Natural killer cell (primary cell): ENCODE measurements at regions of chr12 and their contacts with region 1.

Region 1: GRCh38 chr12:56630160-56630632 is at the start of gene BAZ2A:
- DNase-seq: peak; percentile 84 to 89
- ATAC-seq: peak; percentile 70 to 88 (median 78)
- H3K4me3 ChIP-seq: peak within 1 kb of the TSS; percentile 97
- H3K4me3 Mint-ChIP-seq: peak within 1 kb of the TSS; percentile 89
- H3K27ac ChIP-seq: peak within 1 kb of the TSS; percentile 96
- H3K27ac Mint-ChIP-seq: peak within 1 kb of the TSS; percentile 85 to 93
- H3K4me1 ChIP-seq: peaks cover 61% of the 10 kb centered on the region
- H3K4me1 Mint-ChIP-seq: peaks cover 62 to 74% of the 10 kb centered on the region in 2 donors
- H3K27me3 ChIP-seq: no peaks in the 10 kb centered on the region
- H3K27me3 Mint-ChIP-seq: no peaks in the 10 kb centered on the region
- CTCF ChIP-seq: no peak
- total RNA-seq, gene BAZ2A: 320 to 354 (median 325) TPM

Region 2: DNA sequence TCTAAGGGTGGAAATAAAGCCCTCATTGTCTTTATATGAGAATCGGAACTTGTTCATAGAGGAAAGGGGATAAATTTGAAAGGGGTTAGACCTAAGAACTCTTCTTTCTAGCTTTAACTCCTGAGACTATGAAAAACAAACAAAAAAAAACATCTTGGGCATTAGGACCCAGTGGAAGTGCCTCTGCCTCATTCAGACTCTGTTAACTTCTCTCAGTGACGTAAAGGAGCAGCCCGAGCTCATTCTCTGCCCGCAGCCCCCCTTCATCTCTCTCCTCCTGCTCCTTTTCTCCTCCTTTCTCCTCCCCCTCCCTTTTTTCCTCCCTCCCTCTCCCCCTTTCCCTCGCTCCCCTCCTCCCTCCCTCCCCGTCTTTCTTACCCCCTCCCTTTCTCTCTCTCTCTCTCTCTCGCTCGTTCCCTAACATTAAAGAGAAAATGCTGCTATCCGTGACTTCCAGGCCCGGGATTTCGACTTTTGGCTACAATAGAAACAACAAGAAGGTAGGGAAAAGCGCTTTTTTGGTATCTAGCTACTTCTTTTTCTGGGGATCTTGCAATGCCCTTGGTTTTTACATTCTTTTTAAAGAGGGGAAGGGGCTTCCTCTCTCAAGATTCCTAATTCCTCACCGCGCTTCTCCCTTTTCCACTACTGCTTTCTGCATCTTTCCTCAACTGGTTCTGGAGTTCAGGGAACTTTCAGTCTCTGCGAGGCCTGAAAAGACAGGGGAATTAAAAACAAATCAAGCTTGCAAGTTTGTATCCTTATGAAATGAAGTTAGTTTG is 108.4 kb before region 1 on chr12 and contains the start of gene RBMS2:
- intact Hi-C with region 1: loop called (anchors 2 kb)
- DNase-seq: peak; percentile 25 to 80
- ATAC-seq: peak; percentile 92 to 94 (median 92)
- H3K4me3 ChIP-seq: peak within 1 kb of the TSS; percentile 40
- H3K4me3 Mint-ChIP-seq: peak within 1 kb of the TSS; percentile 98
- H3K27ac ChIP-seq: peak within 1 kb of the TSS; percentile 48
- H3K27ac Mint-ChIP-seq: peak within 1 kb of the TSS; percentile 70 to 88
- H3K4me1 ChIP-seq: peaks cover 11% of the 10 kb centered on the region
- H3K4me1 Mint-ChIP-seq: peaks cover 23 to 30% of the 10 kb centered on the region in 2 donors
- H3K27me3 ChIP-seq: no peaks in the 10 kb centered on the region
- H3K27me3 Mint-ChIP-seq: no peaks in the 10 kb centered on the region
- CTCF ChIP-seq: no peak
- total RNA-seq, gene RBMS2: 10.8 to 16.5 (median 15.6) TPM

Region 3: GRCh38 chr12:56645717-56646446 is 15.7 kb after region 1 on chr12 and contains the start of gene ATP5F1B:
- intact Hi-C with region 1: loop called (anchors 1 kb)
- DNase-seq: peak; percentile 84 to 97
- ATAC-seq: peak; percentile 96 to 99 (median 96)
- H3K4me3 ChIP-seq: peak within 1 kb of the TSS; percentile 98
- H3K4me3 Mint-ChIP-seq: peak within 1 kb of the TSS; percentile 96
- H3K27ac ChIP-seq: peak within 1 kb of the TSS; percentile 91
- H3K27ac Mint-ChIP-seq: peak within 1 kb of the TSS; percentile 92 to 97
- H3K4me1 ChIP-seq: peaks cover 18% of the 10 kb centered on the region
- H3K4me1 Mint-ChIP-seq: peaks cover 27 to 28% of the 10 kb centered on the region in 2 donors
- H3K27me3 ChIP-seq: no peaks in the 10 kb centered on the region
- H3K27me3 Mint-ChIP-seq: no peaks in the 10 kb centered on the region
- CTCF ChIP-seq: no peak
- total RNA-seq, gene ATP5F1B: 335 to 378 (median 342) TPM

Region 4: DNA sequence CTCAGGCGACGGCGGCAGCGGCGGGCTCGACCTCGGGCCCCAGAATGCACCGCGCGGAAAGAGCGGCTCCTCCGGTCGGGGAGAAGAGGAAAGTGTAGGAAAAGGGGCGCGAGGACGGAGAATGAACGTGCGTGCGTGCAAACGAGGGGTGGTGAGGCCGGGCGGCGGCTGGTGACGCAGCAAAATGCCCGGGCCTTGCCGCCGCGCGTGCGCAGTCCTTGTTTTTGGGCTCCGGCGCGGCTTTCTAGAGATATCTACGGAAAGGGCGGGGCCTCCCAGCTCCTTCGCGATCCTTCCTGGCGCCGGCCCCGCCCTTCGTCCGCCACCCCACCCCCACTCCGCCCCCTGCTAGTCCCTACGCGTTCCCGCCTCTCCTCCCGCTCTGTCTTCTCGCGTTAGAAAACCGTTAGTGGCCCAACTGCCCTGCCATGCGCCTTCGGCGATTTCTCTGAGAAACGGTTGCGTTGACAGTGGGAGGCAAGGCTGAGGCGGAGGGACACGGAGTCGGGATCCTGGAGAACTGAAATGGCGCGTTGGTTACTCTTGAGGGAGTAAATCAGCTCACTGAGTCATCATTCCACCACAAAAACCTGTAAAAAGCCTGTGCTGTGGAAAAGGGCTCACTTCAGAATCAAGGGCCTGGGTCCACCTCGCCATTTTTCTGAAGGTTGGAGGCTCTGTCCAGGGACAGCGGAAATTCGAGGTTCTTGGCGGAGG is 58.1 kb after region 1 on chr12 and contains the start of gene PTGES3:
- intact Hi-C with region 1: loop called (anchors 2 kb)
- DNase-seq: peak; percentile 96 to 100
- ATAC-seq: peak; percentile 76 to 95 (median 83)
- H3K4me3 ChIP-seq: peak within 1 kb of the TSS; percentile 80
- H3K4me3 Mint-ChIP-seq: peak within 1 kb of the TSS; percentile 98
- H3K27ac ChIP-seq: peak within 1 kb of the TSS; percentile 94
- H3K27ac Mint-ChIP-seq: peak within 1 kb of the TSS; percentile 95 to 99
- H3K4me1 ChIP-seq: peaks cover 36% of the 10 kb centered on the region
- H3K4me1 Mint-ChIP-seq: peaks cover 41 to 44% of the 10 kb centered on the region in 2 donors
- H3K27me3 ChIP-seq: no peaks in the 10 kb centered on the region
- H3K27me3 Mint-ChIP-seq: no peaks in the 10 kb centered on the region
- CTCF ChIP-seq: no peak
- total RNA-seq, gene PTGES3: 79.2 to 93.8 (median 93.4) TPM

Region 5: GRCh38 chr12:56724972-56725722 is 95.0 kb after region 1 on chr12 and contains the start of gene NACA:
- intact Hi-C with region 1: no loop called
- DNase-seq: peak; percentile 92 to 99
- ATAC-seq: peak; percentile 92 to 98 (median 93)
- H3K4me3 ChIP-seq: peak within 1 kb of the TSS; percentile 99
- H3K4me3 Mint-ChIP-seq: peak within 1 kb of the TSS; percentile 99
- H3K27ac ChIP-seq: peak within 1 kb of the TSS; percentile 98
- H3K27ac Mint-ChIP-seq: peak within 1 kb of the TSS; percentile 98
- H3K4me1 ChIP-seq: peaks cover 38% of the 10 kb centered on the region
- H3K4me1 Mint-ChIP-seq: peaks cover 58 to 60% of the 10 kb centered on the region in 2 donors
- H3K27me3 ChIP-seq: no peaks in the 10 kb centered on the region
- H3K27me3 Mint-ChIP-seq: no peaks in the 10 kb centered on the region
- CTCF ChIP-seq: no peak
- total RNA-seq, gene NACA: 644 to 785 (median 695) TPM